Left ventricle myocardium inferior (tissue), 1 donor: ENCODE measurements at regions of chr11 and their contacts with region 1.

Region 1: GRCh38 chr11:28697920-28698827 is 590.0 kb downstream of the METTL15 start:
- DNase-seq: peak; percentile 38
- H3K4me3 ChIP-seq: no peak overlapping the region
- H3K27ac ChIP-seq: no peak overlapping the region
- H3K4me1 ChIP-seq: no peaks in the 10 kb centered on the region
- H3K27me3 ChIP-seq: peaks cover 6% of the 10 kb centered on the region
- CTCF ChIP-seq: peak; percentile 83

Region 2: DNA sequence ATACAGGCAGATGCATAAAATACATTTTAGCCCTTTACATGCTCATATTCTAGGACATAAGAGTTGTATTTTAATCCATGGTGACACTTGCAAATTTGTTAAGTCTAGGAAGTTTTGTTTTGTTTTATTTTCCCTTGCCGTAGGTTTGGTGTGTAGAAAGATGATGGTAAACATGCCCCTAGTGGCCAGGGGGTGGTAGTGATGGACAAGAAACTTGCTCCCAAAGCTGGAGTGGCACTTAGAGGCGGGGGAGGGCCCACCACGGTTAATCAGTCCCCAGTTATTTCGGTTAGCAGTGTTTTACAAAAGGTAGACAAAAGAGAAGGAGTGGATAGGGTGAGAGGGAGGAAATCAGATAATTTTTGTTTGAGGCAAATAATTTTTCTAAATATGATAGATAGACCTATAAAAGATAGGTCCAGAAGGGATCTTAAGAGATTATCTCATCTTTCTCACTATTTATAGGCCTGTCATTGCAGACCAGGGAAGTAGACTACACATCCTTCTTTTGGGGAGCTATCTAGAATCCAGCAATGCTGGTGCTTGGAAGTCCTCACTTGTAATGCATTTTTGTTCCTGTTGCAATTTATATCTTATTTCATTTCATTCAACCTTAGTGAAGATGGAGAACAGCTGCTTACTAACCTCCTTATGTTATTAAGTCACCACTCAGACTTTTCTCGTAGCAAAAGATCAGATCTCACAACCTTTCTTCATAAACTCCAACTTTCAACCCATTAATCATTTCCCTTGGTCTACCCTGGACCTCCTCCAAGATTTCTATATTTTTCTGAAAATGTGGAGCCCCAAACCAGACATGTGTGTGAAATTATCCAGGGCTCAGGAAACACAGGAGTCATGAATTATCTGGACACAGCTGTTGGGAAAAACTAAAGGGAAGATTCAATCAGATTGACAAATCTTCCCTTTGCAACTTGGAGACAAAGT is 992.0 kb before region 1 on chr11:
- intact Hi-C with region 1: loop called (anchors 10 kb)
- DNase-seq: no peak
- H3K4me3 ChIP-seq: no peak overlapping the region
- H3K27ac ChIP-seq: no peak overlapping the region
- H3K4me1 ChIP-seq: peaks cover 8% of the 10 kb centered on the region
- H3K27me3 ChIP-seq: peaks cover 23% of the 10 kb centered on the region
- CTCF ChIP-seq: peak; percentile 72